ENCODE measurements at regions of chr3 and their contacts with region 1.

Region 1: GRCh38 chr3:48439820-48440589 is at the starts of genes CCDC51 and TMA7:
- DNase-seq: peak; percentile 97
- H3K4me3 ChIP-seq: peak within 1 kb of the TSS; percentile 64 to 97 (median 96)
- H3K27ac ChIP-seq: peak within 1 kb of the TSS; percentile 63
- H3K4me1 ChIP-seq: peaks cover 20% of the 10 kb centered on the region
- H3K27me3 ChIP-seq: no peaks in the 10 kb centered on the region
- CTCF ChIP-seq: no peak
- total RNA-seq, gene CCDC51: 25.6 to 27.3 TPM
- total RNA-seq, gene TMA7: 80.5 to 270 TPM

Region 2: DNA sequence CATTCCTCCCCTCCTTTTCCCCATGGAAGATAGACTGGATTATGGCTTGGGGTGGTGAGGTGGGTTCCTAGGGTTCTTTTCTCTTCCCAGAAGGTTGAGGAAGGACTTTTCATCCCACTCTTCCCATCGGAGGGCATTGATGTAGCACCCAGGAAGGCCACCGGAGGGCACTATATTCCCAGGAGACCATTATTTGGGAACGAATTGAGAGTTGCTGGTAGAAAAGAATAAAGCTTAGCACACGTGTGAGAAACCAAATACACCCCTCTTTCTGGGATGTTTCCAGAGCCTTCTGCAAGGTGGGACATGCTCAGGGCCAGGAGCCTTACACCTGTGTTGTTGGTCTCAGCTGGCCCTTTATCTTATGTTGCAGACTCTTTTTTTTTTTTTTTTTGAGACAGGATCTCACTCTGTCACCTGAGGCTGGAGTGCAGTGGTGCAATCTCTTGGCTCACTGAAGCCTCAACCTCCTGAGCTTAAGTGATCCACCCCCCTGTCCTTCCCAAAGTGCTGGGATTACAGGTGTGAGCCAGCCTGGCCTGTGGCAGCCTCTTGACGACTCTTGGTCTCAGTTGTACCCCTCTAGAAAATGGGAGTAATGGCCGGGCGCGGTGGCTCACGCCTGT is 245.4 kb before region 1 on chr3:
- CTCF ChIA-PET with region 1: interaction called, 21 read pairs
- dilution Hi-C with region 1: no loop called
- in situ Hi-C with region 1: loop called in 1 of 2 experiments (anchors 5 kb)
- intact Hi-C with region 1: loop called (anchors 1 kb)
- DNase-seq: peak; percentile 63
- H3K4me3 ChIP-seq: no peak overlapping the region
- H3K27ac ChIP-seq: no peak overlapping the region
- H3K4me1 ChIP-seq: peaks cover 2% of the 10 kb centered on the region
- H3K27me3 ChIP-seq: no peaks in the 10 kb centered on the region
- CTCF ChIP-seq: peak; percentile 88 to 97

Region 3: GRCh38 chr3:48232734-48233133 is 207.3 kb before region 1 on chr3:
- CTCF ChIA-PET with region 1: interaction called, 5 read pairs
- dilution Hi-C with region 1: no loop called
- in situ Hi-C with region 1: no loop called
- intact Hi-C with region 1: loop called (anchors 1 kb)
- DNase-seq: peak; percentile 60
- H3K4me3 ChIP-seq: peak overlapping the region in 1 of 3 experiments; percentile 4
- H3K27ac ChIP-seq: no peak overlapping the region
- H3K4me1 ChIP-seq: peaks cover 5% of the 10 kb centered on the region
- H3K27me3 ChIP-seq: no peaks in the 10 kb centered on the region
- CTCF ChIP-seq: peak; percentile 52 to 74

Region 4: GRCh38 chr3:48273594-48274211 is 166.3 kb before region 1 on chr3:
- CTCF ChIA-PET with region 1: interaction called, 20 read pairs
- dilution Hi-C with region 1: loop called (anchors 5 kb)
- in situ Hi-C with region 1: loop called (anchors 5 kb)
- intact Hi-C with region 1: loop called (anchors 1 kb)
- DNase-seq: peak; percentile 34
- H3K4me3 ChIP-seq: no peak overlapping the region
- H3K27ac ChIP-seq: no peak overlapping the region
- H3K4me1 ChIP-seq: peaks cover 15% of the 10 kb centered on the region
- H3K27me3 ChIP-seq: no peaks in the 10 kb centered on the region
- CTCF ChIP-seq: peak; percentile 84 to 86

Region 5: GRCh38 chr3:48459773-48460516 is 19.9 kb after region 1 on chr3:
- CTCF ChIA-PET with region 1: interaction called, 10 read pairs
- dilution Hi-C with region 1: no loop called
- in situ Hi-C with region 1: no loop called
- intact Hi-C with region 1: no loop called
- DNase-seq: no peak
- H3K4me3 ChIP-seq: no peak overlapping the region
- H3K27ac ChIP-seq: no peak overlapping the region
- H3K4me1 ChIP-seq: peaks cover 21% of the 10 kb centered on the region
- H3K27me3 ChIP-seq: no peaks in the 10 kb centered on the region
- CTCF ChIP-seq: no peak